ENCODE measurements at regions of chr12 and their contacts with region 1.

Region 1: DNA sequence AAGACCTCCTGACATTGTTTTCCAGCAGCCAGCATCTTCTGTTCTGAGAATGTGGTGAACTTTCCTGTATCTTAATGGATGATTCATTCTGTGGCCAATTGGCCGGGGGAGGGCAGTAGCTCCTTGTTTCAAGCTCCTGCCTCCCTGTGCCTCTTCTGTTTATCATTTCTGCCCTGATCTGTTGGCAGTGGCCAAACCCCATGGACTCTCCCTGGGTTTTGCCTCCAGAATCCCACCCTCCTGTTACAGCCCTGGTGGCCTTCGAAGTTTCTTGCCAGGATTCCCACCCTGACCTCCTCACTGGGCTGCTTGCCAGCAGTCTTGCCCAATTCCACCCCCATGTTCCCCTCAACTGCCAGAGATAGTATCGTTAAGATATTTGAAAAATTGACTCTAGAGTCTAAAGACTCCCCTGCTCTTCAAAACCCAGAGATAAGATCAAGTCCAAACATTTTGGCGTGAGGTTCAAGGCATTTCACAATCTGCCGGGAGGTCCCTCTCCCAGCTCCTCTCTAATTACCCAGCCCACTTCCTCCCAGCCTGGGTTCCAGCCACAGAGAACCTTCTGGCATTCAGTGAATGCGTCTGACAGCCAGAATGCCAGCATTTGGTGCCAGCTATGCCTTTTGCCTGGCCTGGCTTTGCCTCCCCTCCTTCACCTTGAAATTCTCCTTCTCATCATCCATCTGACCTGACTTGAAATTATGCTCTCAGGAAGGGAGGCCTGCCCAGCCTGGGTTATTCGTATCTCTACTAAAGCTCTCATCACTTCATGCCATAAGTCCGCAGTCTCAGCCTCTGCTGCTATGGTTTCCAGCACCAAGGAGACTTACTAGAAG is 37.7 kb upstream of the TXNRD1 start:
- DNase-seq: peak; percentile 89
- H3K4me3 ChIP-seq: no peak overlapping the region
- H3K27ac ChIP-seq: peak overlapping the region; percentile 94
- H3K27me3 ChIP-seq: no peaks in the 10 kb centered on the region
- CTCF ChIP-seq: peak; percentile 53

Region 2: GRCh38 chr12:104137913-104138796 is 39.7 kb before region 1 on chr12 and contains the start of gene NFYB:
- CTCF ChIA-PET with region 1: no interaction called
- POLR2A ChIA-PET with region 1: interaction called, 14 read pairs
- DNase-seq: peak; percentile 96
- H3K4me3 ChIP-seq: peak within 1 kb of the TSS; percentile 82
- H3K27ac ChIP-seq: peak within 1 kb of the TSS; percentile 69
- H3K27me3 ChIP-seq: no peaks in the 10 kb centered on the region
- CTCF ChIP-seq: no peak
- polyA plus RNA-seq, gene NFYB: 34.2 and 57.9 TPM in 2 replicates

Region 3: DNA sequence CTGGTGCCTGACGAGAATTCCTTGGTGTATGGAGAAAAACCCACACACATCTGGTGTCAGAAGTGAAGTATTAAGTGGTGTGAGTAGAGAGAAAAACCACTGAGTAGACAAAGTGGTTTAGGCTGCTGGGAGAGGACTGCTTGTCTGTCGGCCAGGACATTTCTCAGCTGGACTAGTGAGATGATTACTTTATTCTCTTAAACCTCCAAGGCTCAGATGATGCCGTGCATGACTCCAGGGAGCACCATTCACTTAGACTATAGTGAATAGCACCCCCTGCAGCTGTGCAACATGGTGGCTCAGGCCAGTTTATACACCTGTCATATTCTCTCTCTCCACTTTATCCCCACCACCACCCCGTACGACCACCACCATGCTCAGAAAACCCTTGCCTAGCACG is 11.4 kb before region 1 on chr12:
- CTCF ChIA-PET with region 1: interaction called, 17 read pairs
- POLR2A ChIA-PET with region 1: interaction called, 6 read pairs
- DNase-seq: peak; percentile 49
- H3K4me3 ChIP-seq: no peak overlapping the region
- H3K27ac ChIP-seq: no peak overlapping the region
- H3K27me3 ChIP-seq: no peaks in the 10 kb centered on the region
- CTCF ChIP-seq: peak; percentile 38

Region 4: GRCh38 chr12:104201238-104202001 is 23.5 kb after region 1 on chr12:
- CTCF ChIA-PET with region 1: no interaction called
- POLR2A ChIA-PET with region 1: no interaction called
- DNase-seq: no peak
- H3K4me3 ChIP-seq: no peak overlapping the region
- H3K27ac ChIP-seq: no peak overlapping the region
- H3K27me3 ChIP-seq: no peaks in the 10 kb centered on the region
- CTCF ChIP-seq: peak; percentile 94

Measured in AG04450 (cell line).